Endothelial cell of umbilical vein (primary cell): ENCODE measurements at regions of chr3 and their contacts with region 1.

Region 1: GRCh38 chr3:70358978-70359580 is 46.6 kb upstream of the MDFIC2 start:
- DNase-seq: peak; percentile 72
- H3K4me3 ChIP-seq: no peak overlapping the region
- H3K27ac ChIP-seq: no peak overlapping the region
- H3K4me1 ChIP-seq: no peaks in the 10 kb centered on the region
- H3K27me3 ChIP-seq: no peaks in the 10 kb centered on the region
- CTCF ChIP-seq: peak; percentile 40 to 59
- POLR2A ChIP-seq: no peak

Region 2: DNA sequence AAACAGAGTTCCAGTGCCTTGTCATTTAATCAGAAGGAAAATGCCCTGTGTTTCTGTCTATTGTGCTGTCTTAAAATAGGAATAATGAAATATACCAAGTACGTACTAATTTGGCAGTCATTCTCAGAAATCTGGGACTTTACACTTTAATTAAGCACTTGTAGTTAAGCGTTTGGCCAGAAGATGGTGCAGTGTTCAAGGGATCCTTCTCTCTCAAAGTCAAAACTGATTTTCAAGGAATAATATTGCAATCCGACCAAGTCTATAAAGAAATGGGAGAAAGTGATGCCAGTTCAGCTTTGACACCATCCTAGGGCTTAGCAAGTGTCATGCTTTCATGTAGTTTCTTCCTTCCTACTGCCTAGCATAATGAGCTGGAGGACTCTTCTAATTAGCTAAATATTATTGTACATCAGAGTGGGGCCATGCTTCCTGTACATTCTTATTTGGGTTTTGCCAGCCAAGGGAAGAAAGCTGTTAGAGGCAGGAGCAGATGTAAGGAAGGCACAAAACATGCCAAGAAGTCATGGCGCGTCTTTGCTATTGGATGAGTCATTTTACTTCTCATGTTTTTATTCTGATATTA is 294.8 kb before region 1 on chr3:
- CTCF ChIA-PET with region 1: interaction called, 18 read pairs
- POLR2A ChIA-PET with region 1: no interaction called
- dilution Hi-C with region 1: no loop called
- intact Hi-C with region 1: loop called (anchors 1 kb)
- DNase-seq: peak; percentile 71
- H3K4me3 ChIP-seq: no peak overlapping the region
- H3K27ac ChIP-seq: no peak overlapping the region
- H3K4me1 ChIP-seq: no peaks in the 10 kb centered on the region
- H3K27me3 ChIP-seq: peaks cover 10 to 12% of the 10 kb centered on the region in 2 experiments
- CTCF ChIP-seq: peak; percentile 51 to 52
- POLR2A ChIP-seq: no peak

Region 3: GRCh38 chr3:70090322-70090913 is 268.7 kb before region 1 on chr3:
- CTCF ChIA-PET with region 1: interaction called, 64 read pairs
- POLR2A ChIA-PET with region 1: no interaction called
- dilution Hi-C with region 1: no loop called
- intact Hi-C with region 1: loop called (anchors 1 kb)
- DNase-seq: peak; percentile 52
- H3K4me3 ChIP-seq: no peak overlapping the region
- H3K27ac ChIP-seq: no peak overlapping the region
- H3K4me1 ChIP-seq: no peaks in the 10 kb centered on the region
- H3K27me3 ChIP-seq: no peaks in the 10 kb centered on the region
- CTCF ChIP-seq: peak; percentile 42 to 52
- POLR2A ChIP-seq: no peak

Region 4: GRCh38 chr3:70249509-70250160 is 109.4 kb before region 1 on chr3:
- CTCF ChIA-PET with region 1: interaction called, 3 read pairs
- POLR2A ChIA-PET with region 1: no interaction called
- dilution Hi-C with region 1: no loop called
- intact Hi-C with region 1: loop called (anchors 2 kb)
- DNase-seq: peak; percentile 96
- H3K4me3 ChIP-seq: no peak overlapping the region
- H3K27ac ChIP-seq: peak overlapping the region; percentile 87
- H3K4me1 ChIP-seq: peaks cover 34% of the 10 kb centered on the region
- H3K27me3 ChIP-seq: no peaks in the 10 kb centered on the region
- CTCF ChIP-seq: no peak
- POLR2A ChIP-seq: peak; percentile 17

Region 5: DNA sequence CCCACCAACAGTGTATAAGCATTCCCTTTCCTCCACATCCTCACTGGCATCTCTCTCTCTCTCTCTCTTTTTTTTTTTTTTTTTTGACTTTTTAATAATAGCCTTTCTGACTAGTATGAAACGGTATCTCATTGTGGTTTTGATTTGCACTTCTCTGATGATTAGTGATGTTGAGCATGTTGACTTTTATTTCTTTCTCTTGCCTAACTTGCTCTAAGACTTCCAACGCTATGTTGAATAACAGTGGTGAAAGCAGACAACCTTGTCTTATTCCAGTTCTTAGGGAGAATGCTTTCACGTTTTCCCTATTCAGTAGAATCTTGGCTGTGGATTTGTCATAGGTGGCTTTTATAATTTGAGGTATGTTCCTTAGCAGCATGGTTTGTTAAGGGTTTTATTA is 202.7 kb after region 1 on chr3:
- CTCF ChIA-PET with region 1: no interaction called
- POLR2A ChIA-PET with region 1: no interaction called
- dilution Hi-C with region 1: no loop called
- intact Hi-C with region 1: no loop called
- DNase-seq: no peak
- H3K4me3 ChIP-seq: no peak overlapping the region
- H3K27ac ChIP-seq: no peak overlapping the region
- H3K4me1 ChIP-seq: no peaks in the 10 kb centered on the region
- H3K27me3 ChIP-seq: peaks cover 0 to 3% of the 10 kb centered on the region in 2 experiments
- CTCF ChIP-seq: no peak
- POLR2A ChIP-seq: no peak